ENCODE measurements at regions of chr7 and their contacts with region 1.

Region 1: GRCh38 chr7:22137466-22137865 is 191.8 kb upstream of the CDCA7L start:
- DNase-seq: no peak
- ATAC-seq: no peak
- H3K4me3 ChIP-seq: no peak overlapping the region
- H3K27ac ChIP-seq: no peak overlapping the region
- H3K4me1 ChIP-seq: peaks cover 13% of the 10 kb centered on the region
- H3K27me3 ChIP-seq: no peaks in the 10 kb centered on the region
- CTCF ChIP-seq: no peak
- EP300 ChIP-seq: no peak
- POLR2A ChIP-seq: no peak
- RAD21 ChIP-seq: no peak

Region 2: DNA sequence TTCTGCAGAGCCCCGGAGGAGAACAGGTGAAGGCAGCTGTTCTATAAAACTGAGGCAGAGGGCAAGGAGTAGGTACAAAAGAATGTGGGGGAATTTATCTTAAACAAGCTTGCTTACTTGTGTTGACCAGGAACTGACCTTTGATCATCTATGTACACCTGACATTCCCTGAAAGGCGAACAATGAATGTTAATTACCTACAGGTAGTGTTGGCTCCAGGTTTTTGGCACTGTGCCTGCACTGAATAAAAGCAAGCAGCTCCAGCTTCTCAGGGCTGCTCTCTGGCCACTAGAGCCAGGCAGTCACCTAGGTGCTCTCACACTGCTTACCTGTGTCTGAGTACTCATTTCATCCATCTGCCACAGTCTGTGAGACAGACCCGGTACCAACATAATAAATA is 132.5 kb after region 1 on chr7:
- CTCF ChIA-PET with region 1: no interaction called
- POLR2A ChIA-PET with region 1: no interaction called
- in situ Hi-C with region 1: no loop called
- intact Hi-C with region 1: loop called (anchors 10 kb)
- DNase-seq: peak; percentile 45
- ATAC-seq: peak; percentile 39; the same call in 2 of the 3 replicates
- H3K4me3 ChIP-seq: no peak overlapping the region
- H3K27ac ChIP-seq: no peak overlapping the region
- H3K4me1 ChIP-seq: peaks cover 27% of the 10 kb centered on the region
- H3K27me3 ChIP-seq: no peaks in the 10 kb centered on the region
- CTCF ChIP-seq: no peak
- EP300 ChIP-seq: no peak
- POLR2A ChIP-seq: no peak
- RAD21 ChIP-seq: no peak